Aorta (tissue), 5 donors: ENCODE measurements at regions of chr3 and their contacts with region 1.

Region 1: DNA sequence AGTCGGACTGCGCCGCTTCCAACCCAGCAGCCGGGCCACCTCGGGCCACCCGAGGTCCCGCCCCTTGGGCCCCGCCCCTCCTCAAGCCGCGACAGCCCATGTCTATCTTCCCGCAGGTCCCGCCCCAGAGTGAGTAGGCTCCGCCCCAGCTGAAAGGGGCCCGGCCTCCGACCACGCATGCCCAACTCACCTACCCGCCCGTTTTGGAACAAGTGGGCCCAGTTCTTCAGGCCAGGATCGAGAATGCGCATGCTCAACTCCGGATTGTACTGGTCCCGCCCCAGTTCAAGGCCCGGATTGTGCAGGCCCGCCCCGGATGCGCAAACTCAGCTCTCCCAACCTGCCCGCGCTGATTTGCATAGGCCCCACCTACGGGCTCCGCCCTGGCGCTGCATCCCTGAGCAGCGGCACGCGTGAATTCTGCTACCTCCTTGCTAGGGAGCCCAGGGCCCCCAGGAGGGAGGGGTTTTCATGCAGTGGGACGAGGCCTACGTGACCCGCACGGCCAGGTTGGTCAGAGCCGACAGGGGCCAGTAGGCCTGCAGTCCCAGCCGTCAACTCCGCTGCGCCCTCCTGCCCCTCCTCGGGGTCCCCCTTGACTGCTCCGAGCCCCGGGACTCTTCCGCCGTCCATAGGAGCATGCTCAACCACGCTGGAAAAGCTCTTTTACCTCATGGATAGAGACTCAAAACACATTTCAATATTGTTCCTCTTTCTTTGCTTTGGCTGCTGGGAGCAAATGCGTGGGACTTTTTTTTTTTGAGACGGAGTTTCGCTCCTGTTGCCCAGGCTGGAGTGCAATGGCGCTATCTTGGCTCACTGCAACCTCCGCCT is at the start of gene PFKFB4:
- DNase-seq: peak; percentile 99 to 100
- ATAC-seq: peak; percentile 95
- H3K4me3 ChIP-seq: peak within 1 kb of the TSS; percentile 12 to 59
- H3K27ac ChIP-seq: peak within 1 kb of the TSS in 1 of 2 donors; percentile 29
- H3K4me1 ChIP-seq: peaks cover 0 to 3% of the 10 kb centered on the region in 2 donors
- H3K27me3 ChIP-seq: no peaks in the 10 kb centered on the region
- total RNA-seq, gene PFKFB4: 7.2 to 14.6 TPM

Region 2: DNA sequence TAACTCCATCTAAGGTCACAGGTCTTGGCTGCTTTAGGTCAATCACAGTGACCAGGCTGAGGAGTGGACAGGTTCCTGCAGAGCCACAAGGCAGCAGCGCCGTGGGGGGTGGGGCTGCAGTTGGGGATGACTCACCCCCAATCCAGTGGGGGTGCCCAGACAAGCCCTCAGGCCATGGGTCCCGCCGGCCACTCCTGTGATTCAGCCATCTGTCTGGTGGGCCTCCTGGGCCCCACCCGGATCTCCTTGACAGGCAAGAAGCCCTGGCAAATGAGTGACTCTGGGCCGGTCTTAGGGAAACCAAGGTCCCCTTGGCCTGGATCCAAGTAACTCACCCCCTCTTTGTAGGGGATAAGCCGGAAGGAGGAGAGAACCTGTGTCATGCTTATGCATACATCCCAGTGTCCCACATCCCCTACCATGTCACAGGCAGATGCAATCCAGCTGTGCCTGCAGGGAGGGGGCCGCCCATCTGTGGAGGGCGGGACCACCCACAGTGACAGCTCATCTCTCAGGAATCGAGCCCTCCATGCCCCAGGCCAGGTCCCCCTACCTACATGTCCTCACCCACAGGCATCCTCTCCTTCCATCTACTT is 38.6 kb after region 1 on chr3:
- intact Hi-C with region 1: loop called (anchors 2 to 5 kb)
- DNase-seq: peak; percentile 78 to 89
- ATAC-seq: no peak
- H3K4me3 ChIP-seq: no peak overlapping the region
- H3K27ac ChIP-seq: no peak overlapping the region
- H3K4me1 ChIP-seq: no peaks in the 10 kb centered on the region
- H3K27me3 ChIP-seq: no peaks in the 10 kb centered on the region